BJ (cell line): ENCODE measurements at regions of chr7 and their contacts with region 1.

Region 1: DNA sequence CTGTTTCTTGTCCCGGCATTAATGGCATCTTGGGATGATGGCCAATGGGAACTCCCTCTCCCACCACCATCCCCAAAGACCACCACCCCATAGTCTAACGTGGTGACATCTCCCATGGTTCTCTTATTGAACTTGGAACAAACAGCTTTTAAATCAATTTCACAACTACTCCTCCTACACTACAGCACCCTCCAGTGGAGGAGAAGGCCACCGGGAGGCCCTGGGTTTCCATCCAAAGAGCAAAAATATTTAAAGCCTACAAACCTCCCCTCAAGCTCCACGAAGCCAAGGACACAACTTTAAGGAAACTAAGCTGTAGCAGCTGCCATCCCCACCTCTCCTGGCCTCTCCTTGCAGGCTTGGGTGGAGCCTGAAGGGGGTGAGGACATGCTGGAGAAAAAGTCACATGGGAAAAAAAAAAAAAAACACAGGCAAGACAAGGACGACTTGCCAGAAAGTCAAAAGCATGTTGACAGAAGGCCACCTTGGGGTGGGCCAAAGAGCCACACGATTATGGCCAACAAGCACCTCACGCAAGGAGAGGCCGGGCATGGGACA is 94.0 kb upstream of the LANCL2 start:
- DNase-seq: no peak
- H3K4me3 ChIP-seq: no peak overlapping the region
- H3K27me3 ChIP-seq: peaks cover 24% of the 10 kb centered on the region
- CTCF ChIP-seq: peak; percentile 70

Region 2: DNA sequence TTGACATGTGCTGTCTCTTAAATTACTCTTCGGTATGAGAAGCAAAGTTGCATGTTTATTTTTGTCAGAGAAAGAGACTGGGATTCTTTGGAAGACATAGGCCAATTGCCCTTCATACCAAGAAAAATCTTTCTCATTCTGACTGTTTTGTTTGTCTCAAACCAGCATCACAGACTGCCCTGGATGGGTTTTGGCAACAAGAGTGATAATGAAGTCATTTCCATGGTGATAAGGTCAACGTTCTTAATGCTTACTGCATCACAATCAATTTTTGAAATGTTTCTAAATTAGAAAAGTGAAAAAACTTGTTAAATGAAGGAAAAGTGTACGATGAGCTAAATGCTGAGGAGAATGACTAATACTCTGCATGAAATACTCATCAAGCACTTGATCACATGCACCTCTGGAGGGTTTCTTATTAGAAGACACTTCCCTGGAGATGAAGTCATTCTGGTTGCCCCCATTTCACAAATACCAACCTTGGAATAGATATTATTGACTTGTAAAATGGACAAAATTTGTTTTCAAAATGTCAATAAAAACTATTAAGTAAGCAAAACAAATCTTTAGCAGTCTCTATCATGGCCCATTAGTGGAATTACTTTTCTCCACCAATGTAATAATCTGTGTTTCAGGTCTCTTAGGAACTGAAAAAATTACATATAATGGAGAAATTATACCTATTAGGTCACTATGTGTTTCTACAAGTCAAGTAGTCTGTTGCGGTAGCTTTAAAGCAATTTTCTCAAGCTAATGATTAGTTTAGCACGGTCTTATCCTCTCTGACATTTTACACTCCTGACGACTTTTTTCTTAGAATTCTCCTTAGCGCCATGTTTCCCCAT is 492.2 kb before region 1 on chr7:
- CTCF ChIA-PET with region 1: interaction called, 48 read pairs
- POLR2A ChIA-PET with region 1: no interaction called
- DNase-seq: no peak
- H3K4me3 ChIP-seq: no peak overlapping the region
- H3K27me3 ChIP-seq: no peaks in the 10 kb centered on the region
- CTCF ChIP-seq: no peak

Region 3: DNA sequence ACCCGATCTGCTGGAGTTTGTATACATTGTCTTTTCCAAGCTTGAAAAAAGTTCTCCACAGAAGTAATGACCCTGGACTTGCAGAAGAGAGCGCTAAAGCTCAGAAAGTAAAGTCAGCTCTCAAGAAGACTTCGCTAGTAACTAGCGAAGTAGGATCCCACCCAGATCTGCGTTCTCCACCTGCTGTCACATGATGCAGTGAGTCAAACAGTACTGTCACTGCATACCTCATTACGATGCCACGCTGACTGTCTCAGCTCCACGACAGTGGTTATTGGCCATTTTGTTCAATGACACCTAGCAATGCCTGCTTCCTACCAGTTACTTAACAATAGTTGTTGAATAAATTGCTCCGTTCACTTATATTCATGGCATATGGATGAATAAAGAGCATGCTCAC is 482.5 kb before region 1 on chr7:
- CTCF ChIA-PET with region 1: interaction called, 11 read pairs
- POLR2A ChIA-PET with region 1: no interaction called
- DNase-seq: peak; percentile 51
- H3K4me3 ChIP-seq: no peak overlapping the region
- H3K27me3 ChIP-seq: no peaks in the 10 kb centered on the region
- CTCF ChIP-seq: peak; percentile 79

Region 4: DNA sequence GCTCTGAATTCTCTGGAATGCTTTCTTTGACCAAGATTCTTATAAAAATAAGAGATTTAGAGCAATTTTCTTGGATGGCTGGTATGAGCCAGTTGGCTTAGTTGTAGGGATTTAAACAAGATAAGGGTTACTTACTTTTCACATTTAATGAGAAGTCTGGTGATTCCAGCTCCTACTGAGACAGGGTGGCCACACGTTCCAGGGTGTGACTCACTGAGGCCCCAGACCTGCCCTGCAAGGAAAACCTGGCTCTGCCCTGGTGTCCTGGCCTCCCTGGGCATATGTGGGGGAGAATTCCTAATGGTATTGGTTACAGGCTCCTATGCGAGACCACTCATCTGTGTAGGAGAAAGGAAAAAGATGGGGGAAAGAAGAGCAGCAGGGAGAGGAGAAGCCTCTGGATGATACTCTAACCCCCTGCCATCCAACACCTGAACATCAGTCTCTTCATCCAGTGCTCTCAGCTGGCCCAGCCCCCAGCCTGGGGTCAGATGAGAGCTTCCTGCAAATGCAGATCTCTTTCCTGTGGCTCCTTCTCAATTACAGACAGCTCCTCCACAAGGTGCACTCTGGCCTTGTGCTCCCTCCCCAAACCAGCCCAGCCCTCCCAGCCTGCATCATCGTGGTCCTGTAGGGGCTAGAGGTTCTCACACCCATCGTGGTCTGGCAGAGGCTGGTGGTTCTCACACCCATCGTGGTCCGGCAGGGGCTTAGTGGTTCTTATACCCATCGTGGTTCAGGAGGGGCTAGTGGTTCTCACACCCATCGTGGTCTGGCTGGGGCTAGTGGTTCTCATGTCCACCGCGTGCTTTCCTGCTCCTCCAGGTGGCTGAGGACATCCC is 112.4 kb before region 1 on chr7:
- CTCF ChIA-PET with region 1: no interaction called
- POLR2A ChIA-PET with region 1: no interaction called
- DNase-seq: peak; percentile 47
- H3K4me3 ChIP-seq: no peak overlapping the region
- H3K27me3 ChIP-seq: no peaks in the 10 kb centered on the region
- CTCF ChIP-seq: no peak

Region 5: DNA sequence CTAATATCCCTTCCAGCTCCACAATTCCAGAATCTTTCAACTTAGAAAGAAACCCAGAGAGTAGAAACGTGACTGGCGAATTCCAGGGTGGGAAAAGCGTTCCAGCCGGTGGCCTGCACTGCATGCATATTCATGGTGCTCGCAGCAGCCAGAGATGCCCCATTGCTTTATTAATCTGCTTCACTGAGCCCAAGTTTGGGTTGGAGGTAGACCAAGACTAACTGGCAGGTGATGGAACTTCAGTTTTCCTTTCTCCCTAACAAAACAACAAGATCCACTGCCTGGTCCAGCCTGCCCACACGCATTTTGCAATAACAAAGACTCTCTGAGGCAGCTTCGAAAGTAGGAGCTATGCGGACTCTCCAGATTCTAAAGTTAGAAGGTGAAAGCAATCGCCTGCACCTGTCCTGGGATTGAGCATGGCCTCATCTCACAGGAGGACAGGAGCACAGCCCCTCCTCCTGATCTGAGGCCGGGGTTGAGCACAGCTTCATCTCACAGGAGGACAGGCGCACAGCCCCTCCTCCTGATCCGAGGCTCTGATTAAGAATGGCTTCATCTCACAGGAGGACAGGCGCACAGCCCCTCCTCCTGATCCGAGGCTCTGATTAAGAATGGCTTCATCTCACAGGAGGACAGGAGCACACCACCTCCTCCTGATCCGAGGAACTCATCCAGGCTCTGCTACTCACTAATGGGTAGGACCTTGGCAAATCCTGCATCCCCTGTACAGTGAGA is 33.8 kb before region 1 on chr7:
- CTCF ChIA-PET with region 1: no interaction called
- POLR2A ChIA-PET with region 1: no interaction called
- DNase-seq: no peak
- H3K4me3 ChIP-seq: no peak overlapping the region
- H3K27me3 ChIP-seq: peaks cover 5% of the 10 kb centered on the region
- CTCF ChIP-seq: no peak

Region 6: DNA sequence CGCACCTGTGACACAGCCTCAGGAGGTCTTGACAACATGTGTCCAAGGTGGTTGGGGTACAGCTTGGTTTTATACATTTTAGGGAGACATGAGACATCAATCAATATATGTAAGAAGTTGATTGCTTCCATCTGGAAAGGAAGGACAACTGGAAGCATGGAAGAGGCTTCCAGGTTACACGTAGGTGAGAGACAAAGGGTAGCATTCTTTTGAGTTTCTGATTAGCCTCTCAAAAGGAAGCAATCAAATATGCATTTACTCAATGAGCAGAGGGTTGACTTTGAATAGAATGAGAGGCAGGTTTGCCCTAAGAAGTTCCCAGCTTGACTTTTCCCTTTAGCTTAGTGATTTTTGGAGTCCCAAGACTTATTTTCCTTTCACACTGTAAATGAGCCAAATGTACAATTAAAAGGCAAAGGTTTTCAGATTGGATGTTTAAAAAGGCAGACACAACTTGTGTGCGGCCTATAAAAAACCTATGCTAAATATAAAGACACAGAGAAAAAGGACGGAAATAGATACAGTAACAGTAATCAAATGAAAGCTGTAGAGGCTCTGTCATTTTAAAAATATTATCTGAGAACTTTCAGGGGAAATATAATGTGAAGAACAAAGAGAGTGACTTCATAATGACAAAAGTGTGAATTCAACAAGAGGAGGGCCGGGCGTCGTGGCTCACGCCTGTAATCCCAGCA is 28.3 kb after region 1 on chr7:
- CTCF ChIA-PET with region 1: no interaction called
- POLR2A ChIA-PET with region 1: no interaction called
- DNase-seq: no peak
- H3K4me3 ChIP-seq: no peak overlapping the region
- H3K27me3 ChIP-seq: peaks cover 2% of the 10 kb centered on the region
- CTCF ChIP-seq: no peak